ENCODE measurements at regions of chr13 and their contacts with region 1.

Region 1: DNA sequence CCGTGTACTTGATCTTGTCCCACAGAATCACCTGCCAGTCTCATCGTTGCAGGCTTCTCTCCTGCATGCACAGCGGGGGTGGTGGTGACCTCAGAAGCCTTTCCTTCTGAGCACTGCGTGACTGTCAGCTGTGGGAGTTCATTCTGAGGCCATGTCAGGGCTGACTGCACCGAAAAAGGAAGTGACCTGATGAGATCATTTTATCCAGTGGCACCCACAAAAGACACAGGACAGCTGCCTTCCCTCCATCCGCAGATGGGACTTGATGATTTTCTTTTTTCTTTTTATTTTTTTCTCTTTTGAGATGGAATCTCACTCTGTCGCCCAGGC is 89.7 kb downstream of the RAB20 start:
- H3K4me3 Mint-ChIP-seq: peak overlapping the region; percentile 66
- H3K27ac Mint-ChIP-seq: peak overlapping the region; percentile 77
- H3K4me1 Mint-ChIP-seq: peaks cover 42% of the 10 kb centered on the region
- H3K27me3 Mint-ChIP-seq: peaks cover 50% of the 10 kb centered on the region

Region 2: GRCh38 chr13:110485603-110486002 is 13.8 kb after region 1 on chr13:
- intact Hi-C with region 1: no loop called
- H3K4me3 Mint-ChIP-seq: no peak overlapping the region
- H3K27ac Mint-ChIP-seq: no peak overlapping the region
- H3K4me1 Mint-ChIP-seq: no peaks in the 10 kb centered on the region
- H3K27me3 Mint-ChIP-seq: peaks cover 34% of the 10 kb centered on the region

Region 3: GRCh38 chr13:110536006-110536693 is 64.4 kb after region 1 on chr13:
- intact Hi-C with region 1: loop called (anchors 1 kb)
- H3K4me3 Mint-ChIP-seq: peak overlapping the region; percentile 23
- H3K27ac Mint-ChIP-seq: peak overlapping the region; percentile 82
- H3K4me1 Mint-ChIP-seq: peaks cover 72% of the 10 kb centered on the region
- H3K27me3 Mint-ChIP-seq: no peaks in the 10 kb centered on the region

Region 4: DNA sequence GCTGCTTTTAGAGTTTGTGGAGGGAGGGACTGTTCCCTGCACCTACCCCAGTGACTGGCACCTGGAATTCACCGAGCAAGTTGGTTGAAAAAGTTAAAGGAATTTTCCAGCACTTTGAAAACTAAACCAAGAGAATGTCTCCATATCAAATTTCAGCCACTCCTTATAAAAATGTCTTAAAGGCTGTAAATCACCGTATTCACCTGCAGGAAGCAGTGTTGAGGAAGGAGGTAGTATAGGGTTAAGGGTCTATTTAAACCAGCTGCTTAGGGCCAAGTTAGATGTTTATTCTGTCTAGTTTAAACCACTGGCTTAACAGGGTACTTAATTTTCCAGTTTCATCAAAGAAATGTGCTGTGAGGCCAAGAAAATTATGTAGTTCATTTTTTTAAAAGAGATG is 93.5 kb after region 1 on chr13:
- intact Hi-C with region 1: no loop called
- H3K4me3 Mint-ChIP-seq: no peak overlapping the region
- H3K27ac Mint-ChIP-seq: no peak overlapping the region
- H3K4me1 Mint-ChIP-seq: peaks cover 30% of the 10 kb centered on the region
- H3K27me3 Mint-ChIP-seq: peaks cover 4% of the 10 kb centered on the region